AG04450 (cell line): ENCODE measurements at regions of chr2 and their contacts with region 1.

Region 1: DNA sequence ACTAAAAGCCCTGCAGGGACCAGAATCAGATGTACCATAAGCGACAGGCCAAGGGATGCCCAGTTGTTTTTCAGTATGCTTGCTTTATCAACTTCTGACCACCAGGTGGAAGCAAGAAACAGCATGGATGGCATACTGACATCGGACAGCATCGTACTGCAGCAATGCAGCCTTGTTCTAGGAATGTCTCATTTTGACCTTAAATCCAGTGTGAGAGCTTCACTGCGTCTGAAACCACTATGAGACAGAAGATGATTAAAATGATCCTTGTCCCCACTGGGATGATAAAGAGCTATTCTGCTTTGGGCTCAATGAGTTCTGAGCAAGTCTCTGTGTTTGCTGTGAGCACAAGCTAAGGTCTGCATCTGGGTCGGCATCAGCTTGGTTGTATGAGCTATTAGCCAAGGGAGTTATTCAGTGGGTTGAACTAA is 54.3 kb downstream of the CDK15 start:
- DNase-seq: peak; percentile 83
- H3K4me3 ChIP-seq: no peak overlapping the region
- H3K27ac ChIP-seq: no peak overlapping the region
- H3K27me3 ChIP-seq: no peaks in the 10 kb centered on the region
- CTCF ChIP-seq: peak; percentile 92

Region 2: DNA sequence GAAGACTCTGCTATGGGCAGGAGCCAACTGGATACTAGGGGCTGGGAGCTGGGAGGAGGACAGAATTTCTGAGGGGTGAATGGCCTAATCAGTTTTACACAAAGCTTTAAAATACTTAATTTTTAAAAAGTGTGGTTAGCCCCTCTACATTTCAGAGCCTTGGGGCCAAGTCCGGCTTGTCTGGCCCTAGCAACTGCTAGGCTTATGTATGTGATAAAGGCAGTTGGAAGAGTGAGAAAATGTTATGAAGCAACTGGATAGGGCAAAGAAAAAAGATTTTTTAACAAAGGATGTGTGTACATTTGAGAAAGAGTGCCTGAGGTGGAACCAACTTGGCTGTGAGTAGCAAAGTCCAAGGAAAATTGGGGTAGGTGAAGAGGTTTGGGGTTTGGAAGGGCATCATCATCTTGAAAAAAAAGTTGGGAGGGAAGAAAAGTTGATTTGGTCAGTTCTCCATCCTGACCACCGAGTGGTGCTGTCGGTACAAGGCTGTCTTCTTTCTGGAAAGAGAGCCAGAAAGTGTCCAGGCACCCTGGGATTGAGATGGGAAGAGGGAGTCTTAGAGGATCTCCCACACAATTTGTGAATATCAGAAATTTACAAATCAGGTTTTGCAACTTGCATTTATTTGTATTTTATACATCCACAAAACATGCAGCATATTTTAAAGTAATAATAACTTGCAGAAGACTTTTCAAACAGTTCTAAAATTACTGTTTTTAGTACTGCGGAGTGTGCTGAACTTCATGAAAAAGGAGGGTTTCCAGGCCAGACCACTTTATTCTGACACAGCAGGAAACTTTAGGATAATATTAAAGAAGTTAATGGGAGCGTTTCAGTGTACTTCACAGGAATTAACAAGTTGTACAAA is 64.8 kb before region 1 on chr2:
- CTCF ChIA-PET with region 1: interaction called, 14 read pairs
- POLR2A ChIA-PET with region 1: interaction called, 12 read pairs
- DNase-seq: no peak
- H3K4me3 ChIP-seq: no peak overlapping the region
- H3K27ac ChIP-seq: no peak overlapping the region
- H3K27me3 ChIP-seq: no peaks in the 10 kb centered on the region
- CTCF ChIP-seq: peak; percentile 88

Region 3: GRCh38 chr2:201880993-201881611 is 20.5 kb after region 1 on chr2:
- CTCF ChIA-PET with region 1: interaction called, 24 read pairs
- POLR2A ChIA-PET with region 1: no interaction called
- DNase-seq: no peak
- H3K4me3 ChIP-seq: peak overlapping the region; percentile 15; the same call in 1 of the 2 replicates
- H3K27ac ChIP-seq: peak overlapping the region; percentile 74
- H3K27me3 ChIP-seq: no peaks in the 10 kb centered on the region
- CTCF ChIP-seq: no peak

Region 4: DNA sequence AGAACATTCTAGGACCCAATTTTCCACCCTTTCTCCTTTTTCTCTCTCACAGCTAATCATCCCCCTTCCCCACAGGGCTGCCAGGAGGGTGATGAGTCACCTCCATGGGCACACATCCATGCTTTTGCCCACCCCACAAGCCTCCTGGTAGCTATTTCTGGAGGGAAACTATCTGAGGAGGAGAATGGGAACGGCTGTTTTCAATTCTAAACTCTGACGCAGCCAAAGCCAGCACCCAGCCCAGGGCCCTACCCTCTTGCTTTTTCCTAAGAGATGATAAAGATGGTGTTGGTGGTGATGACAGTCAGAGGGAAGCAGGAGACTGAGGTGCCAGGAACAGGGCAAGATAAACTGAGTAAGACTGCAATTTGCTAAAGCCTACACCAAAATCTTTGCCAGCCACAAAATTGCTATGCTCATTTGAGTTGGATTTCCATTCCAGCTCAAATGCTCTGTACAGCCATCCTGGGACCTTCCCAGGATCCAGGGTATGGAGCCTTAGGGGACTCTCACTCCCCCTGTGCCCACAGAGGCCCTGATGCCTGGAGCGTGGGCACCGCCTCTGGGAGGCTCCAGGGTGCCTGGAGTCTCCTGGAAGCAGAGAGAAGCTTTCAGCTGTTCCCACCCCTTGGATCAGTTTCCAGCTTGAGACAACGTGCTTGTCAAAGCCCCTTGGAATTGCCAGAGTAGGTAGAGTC is 111.0 kb after region 1 on chr2:
- CTCF ChIA-PET with region 1: interaction called, 10 read pairs
- POLR2A ChIA-PET with region 1: interaction called, 3 read pairs
- DNase-seq: no peak
- H3K4me3 ChIP-seq: no peak overlapping the region
- H3K27ac ChIP-seq: no peak overlapping the region
- H3K27me3 ChIP-seq: no peaks in the 10 kb centered on the region
- CTCF ChIP-seq: no peak

Region 5: DNA sequence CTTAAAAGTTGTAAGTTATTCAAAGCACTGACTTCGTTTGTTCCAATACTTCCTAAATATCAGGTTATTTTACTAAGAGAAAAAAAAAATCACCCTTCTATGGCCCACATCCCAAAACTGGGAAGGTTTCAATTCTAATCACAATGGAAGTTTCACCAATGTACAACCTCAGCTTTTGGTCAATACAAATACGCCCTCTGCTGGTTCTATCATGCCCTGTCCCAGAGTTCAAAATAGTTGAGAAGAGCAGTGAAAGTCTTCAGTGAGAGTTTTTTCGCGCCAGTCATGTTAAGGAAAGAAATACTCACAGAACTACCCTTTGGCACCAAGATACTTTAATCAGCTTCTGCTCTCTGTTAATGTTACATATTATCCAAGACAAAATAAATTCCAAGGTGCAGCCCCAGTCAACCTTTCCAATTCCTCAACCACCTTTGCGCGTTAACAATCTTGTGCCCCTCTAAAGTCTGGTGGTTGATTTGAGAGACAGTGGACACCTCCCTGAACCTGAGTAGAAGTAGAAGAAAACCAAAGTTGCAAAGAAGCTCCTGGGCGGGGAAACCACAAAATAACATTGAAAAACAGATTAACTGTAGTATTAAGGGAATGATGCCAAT is 317.8 kb after region 1 on chr2:
- CTCF ChIA-PET with region 1: interaction called, 21 read pairs
- POLR2A ChIA-PET with region 1: no interaction called
- DNase-seq: peak; percentile 43
- H3K4me3 ChIP-seq: no peak overlapping the region
- H3K27ac ChIP-seq: no peak overlapping the region
- H3K27me3 ChIP-seq: no peaks in the 10 kb centered on the region
- CTCF ChIP-seq: peak; percentile 83